Prostate gland (tissue), 2 donors: ENCODE measurements at regions of chr9 and their contacts with region 1.

Region 1: GRCh38 chr9:19379697-19380046 is 364 bp downstream of the RPS6 start:
- DNase-seq: no peak
- H3K4me3 ChIP-seq: peak overlapping the region; percentile 52 to 85
- H3K27ac ChIP-seq: peak overlapping the region; percentile 95
- H3K4me1 ChIP-seq: peaks cover 4% of the 10 kb centered on the region
- H3K27me3 ChIP-seq: no peaks in the 10 kb centered on the region
- CTCF ChIP-seq: no peak
- POLR2A ChIP-seq: no peak

Region 2: GRCh38 chr9:19102631-19103345 is 276.9 kb before region 1 on chr9 and contains the start of gene HAUS6:
- intact Hi-C with region 1: loop called (anchors 5 kb)
- DNase-seq: peak; percentile 94
- H3K4me3 ChIP-seq: peak within 1 kb of the TSS; percentile 56 to 67
- H3K27ac ChIP-seq: peak within 1 kb of the TSS; percentile 61 to 85
- H3K4me1 ChIP-seq: no peaks in the 10 kb centered on the region
- H3K27me3 ChIP-seq: no peaks in the 10 kb centered on the region
- CTCF ChIP-seq: peak; percentile 16 to 82 (median 58)
- POLR2A ChIP-seq: peak; percentile 67
- total RNA-seq, gene HAUS6: 7.3 to 11.3 TPM

Region 3: GRCh38 chr9:19127881-19128500 is 251.7 kb before region 1 on chr9:
- intact Hi-C with region 1: loop called (anchors 10 kb)
- DNase-seq: no peak
- H3K4me3 ChIP-seq: peak overlapping the region; percentile 66 to 74
- H3K27ac ChIP-seq: peak overlapping the region; percentile 92 to 96
- H3K4me1 ChIP-seq: no peaks in the 10 kb centered on the region
- H3K27me3 ChIP-seq: no peaks in the 10 kb centered on the region
- CTCF ChIP-seq: no peak
- POLR2A ChIP-seq: no peak

Region 4: DNA sequence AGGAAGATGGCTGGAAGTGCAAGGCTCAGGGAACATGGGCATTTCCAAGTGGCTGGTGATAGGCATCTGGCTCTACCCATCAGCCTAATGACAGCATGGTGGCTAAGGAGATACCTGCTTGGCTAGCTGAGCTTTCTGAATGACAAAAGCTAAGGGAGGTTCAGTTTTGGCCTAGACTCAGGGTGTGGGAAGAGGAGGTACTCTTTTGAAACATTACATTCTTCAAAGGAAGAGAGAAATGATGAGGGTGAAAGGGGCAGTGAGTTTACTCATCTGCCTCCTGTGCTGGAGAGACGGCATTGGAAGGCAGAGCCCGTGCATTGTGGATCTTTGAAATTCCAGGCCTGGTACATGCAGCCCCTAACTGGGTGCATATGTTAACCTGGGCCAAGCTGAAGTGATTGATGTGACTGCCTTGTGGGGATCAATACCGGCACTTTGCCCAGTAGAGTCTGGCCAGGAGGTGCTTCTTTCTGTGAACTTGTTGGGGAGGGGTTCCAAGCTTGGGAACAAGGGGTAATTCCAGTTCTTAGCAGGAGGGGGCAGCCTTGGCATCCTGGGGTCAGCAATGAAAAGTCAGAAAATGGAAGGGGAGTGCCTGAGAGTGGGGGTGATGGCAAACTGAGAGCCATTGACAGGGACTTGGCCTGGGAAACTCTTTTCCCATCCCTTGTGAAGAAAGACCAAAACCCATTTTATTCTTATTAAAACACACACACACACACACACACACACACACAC is 137.7 kb after region 1 on chr9:
- intact Hi-C with region 1: no loop called
- DNase-seq: no peak
- H3K4me3 ChIP-seq: no peak overlapping the region
- H3K27ac ChIP-seq: no peak overlapping the region
- H3K4me1 ChIP-seq: no peaks in the 10 kb centered on the region
- H3K27me3 ChIP-seq: no peaks in the 10 kb centered on the region
- CTCF ChIP-seq: peak in 2 of 4 experiments; percentile 11 to 21
- POLR2A ChIP-seq: no peak

Region 5: GRCh38 chr9:19720377-19720776 is 340.7 kb after region 1 on chr9:
- intact Hi-C with region 1: no loop called
- DNase-seq: no peak
- H3K4me3 ChIP-seq: no peak overlapping the region
- H3K27ac ChIP-seq: no peak overlapping the region
- H3K4me1 ChIP-seq: no peaks in the 10 kb centered on the region
- H3K27me3 ChIP-seq: no peaks in the 10 kb centered on the region
- CTCF ChIP-seq: no peak
- POLR2A ChIP-seq: no peak